MCF 10A (cell line): ENCODE measurements at regions of chr22 and their contacts with region 1.

Region 1: DNA sequence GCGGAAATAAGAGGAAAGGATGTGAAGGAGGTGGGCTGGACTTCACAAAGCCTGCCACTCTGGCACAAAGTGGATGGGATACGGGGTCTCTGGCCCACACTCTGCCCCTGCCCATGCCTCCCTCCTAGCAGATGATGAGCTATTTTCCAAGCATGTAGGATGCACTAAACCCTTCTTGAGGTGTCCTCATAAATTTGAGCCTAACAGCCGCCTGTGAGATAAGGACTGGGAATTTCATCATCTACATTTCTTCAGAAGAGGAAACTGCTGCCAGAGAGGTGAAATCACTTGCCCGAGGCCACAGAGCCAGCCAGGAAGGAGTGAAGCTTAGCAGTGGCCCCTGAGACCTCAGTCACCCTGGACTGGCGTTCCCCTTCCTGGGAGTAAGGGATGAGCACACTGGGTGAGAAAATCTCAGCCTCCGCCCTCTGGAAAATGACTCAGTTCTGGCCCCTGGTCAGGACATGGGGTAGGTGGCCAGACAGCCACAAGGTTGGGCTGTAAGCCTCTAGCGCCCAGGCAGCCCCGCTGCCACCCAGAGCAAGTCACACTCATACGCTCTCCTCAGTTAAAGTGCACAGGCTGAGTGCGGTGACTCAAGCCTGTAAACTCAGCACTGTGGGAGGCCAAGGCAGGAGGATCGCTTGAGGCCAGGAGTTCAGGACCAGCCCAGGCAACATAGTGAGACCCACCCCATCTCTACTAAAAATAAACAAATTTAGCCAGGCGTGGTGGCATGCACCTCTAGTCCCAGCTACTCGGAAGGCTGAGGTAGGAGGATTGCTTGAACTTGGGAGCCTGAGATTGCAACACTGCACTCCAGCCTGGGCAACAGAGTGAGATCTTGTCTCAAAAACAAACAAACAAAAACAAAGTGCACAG is 27.8 kb downstream of the MB start:
- DNase-seq: peak; percentile 97
- H3K4me3 Mint-ChIP-seq: no peak overlapping the region
- H3K27ac Mint-ChIP-seq: peak overlapping the region; percentile 36
- H3K4me1 Mint-ChIP-seq: peaks cover 32% of the 10 kb centered on the region
- H3K27me3 Mint-ChIP-seq: no peaks in the 10 kb centered on the region
- CTCF ChIP-seq: no peak

Region 2: DNA sequence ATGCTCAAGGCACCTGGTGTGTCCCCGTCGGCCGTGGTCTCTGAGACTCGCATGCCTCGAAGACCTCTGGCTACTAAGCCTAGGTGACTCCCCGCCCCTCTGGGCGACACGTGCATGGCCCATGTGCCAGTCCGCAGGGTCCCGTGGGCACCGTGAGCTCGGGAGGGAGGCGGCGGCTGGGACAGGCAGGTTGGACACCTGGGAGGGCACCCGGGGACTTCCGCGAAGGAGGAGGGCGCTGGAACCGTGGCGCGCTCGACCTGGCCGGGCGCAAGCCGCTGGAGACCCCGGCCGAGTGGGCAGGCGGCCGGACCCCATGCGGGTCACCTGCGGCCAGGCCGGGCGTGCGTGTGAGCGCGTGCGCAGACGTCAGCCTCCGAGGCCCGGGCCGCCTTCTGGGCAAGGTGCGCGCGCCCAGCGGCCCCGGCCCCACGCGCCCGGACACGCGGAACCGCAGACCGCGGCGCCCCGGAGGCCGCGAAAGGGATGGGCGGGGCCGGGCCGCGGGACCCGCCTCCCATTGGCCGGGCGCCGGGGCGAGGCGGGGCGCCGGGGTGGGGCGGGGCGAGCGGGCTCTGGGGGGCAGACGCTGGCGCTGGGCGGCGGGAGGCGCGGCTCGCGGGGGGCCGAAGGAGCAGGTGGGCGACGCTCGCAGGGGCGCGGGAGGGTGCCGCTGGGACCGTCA is 49.3 kb before region 1 on chr22:
- CTCF ChIA-PET with region 1: no interaction called
- POLR2A ChIA-PET with region 1: no interaction called
- intact Hi-C with region 1: loop called (anchors 1 kb)
- DNase-seq: peak; percentile 26
- H3K4me3 Mint-ChIP-seq: peak overlapping the region; percentile 53
- H3K27ac Mint-ChIP-seq: no peak overlapping the region
- H3K4me1 Mint-ChIP-seq: peaks cover 11% of the 10 kb centered on the region
- H3K27me3 Mint-ChIP-seq: peaks cover 23% of the 10 kb centered on the region
- CTCF ChIP-seq: no peak

Region 3: DNA sequence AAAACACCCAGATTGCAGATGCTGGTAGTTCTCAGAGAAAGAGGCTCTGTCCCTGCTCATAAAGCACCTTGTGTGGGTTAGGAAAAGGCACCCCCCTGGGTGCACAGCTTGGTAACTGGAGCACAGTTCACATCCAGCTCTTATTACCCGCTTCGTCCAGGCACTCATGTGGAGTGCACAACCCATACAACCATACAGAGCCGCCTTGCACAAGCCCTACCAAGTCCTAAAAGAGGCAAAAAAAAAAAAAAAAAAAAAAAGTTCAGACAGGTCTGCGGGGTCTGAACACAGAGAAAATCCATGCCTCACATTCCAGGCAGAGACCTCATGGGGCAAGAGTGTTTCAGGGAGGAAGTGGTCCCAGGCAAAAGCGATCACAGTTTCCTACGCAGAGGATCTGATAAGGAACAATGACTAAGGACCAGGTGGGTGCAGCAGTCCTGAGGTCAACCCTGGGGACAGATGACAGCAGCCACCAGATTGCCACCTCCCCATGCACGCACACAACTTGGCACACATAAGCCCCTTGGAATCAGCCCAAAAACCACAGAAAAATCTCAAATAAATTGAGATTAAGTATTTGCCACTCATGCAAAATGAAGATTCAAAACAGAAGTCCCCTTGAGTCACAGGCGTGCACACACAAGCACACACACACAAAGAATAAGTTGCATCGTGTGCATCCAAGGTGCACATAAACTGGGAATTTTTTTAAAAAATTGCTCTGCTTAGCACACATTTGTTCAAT is 15.5 kb after region 1 on chr22:
- CTCF ChIA-PET with region 1: no interaction called
- POLR2A ChIA-PET with region 1: no interaction called
- intact Hi-C with region 1: no loop called
- DNase-seq: no peak
- H3K4me3 Mint-ChIP-seq: no peak overlapping the region
- H3K27ac Mint-ChIP-seq: no peak overlapping the region
- H3K4me1 Mint-ChIP-seq: no peaks in the 10 kb centered on the region
- H3K27me3 Mint-ChIP-seq: peaks cover 18% of the 10 kb centered on the region
- CTCF ChIP-seq: no peak